Activated naive CD8-positive, alpha-beta T cell treated with anti-CD3 and anti-CD28 coated beads, Interleukin-2, amount 10 ng/mL, durations not matched to agents 7 days and 5 days (primary cell): ENCODE measurements at regions of chr2 and their contacts with region 1.

Region 1: DNA sequence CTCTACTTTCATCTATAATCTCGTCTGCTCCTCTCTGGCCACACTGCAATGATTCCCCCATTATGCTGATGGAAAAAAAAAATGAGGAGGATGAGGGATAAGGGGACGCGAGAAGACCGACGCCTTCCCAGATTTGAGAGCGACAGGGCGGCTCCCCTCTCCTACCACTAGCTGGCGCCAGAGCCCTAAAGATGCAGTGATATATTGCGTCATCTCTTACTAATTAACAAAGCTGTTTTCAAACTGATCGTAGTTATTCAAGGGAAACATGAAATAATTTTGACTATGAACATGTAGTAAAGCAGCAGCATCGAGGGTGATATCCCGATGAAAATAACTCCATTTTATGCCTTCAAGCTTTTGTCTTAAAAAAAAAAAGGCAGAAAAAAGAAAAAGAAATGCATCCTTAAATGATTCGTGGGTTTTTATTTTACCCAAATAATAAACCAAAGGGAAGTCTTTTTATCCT is 48.0 kb upstream of the HNRNPA3 start:
- DNase-seq: peak; percentile 77
- ATAC-seq: peak; percentile 55
- H3K4me3 Mint-ChIP-seq: no peak overlapping the region
- H3K27ac Mint-ChIP-seq: no peak overlapping the region
- H3K4me1 Mint-ChIP-seq: peaks cover 34% of the 10 kb centered on the region
- H3K27me3 Mint-ChIP-seq: peaks cover 16% of the 10 kb centered on the region

Region 2: DNA sequence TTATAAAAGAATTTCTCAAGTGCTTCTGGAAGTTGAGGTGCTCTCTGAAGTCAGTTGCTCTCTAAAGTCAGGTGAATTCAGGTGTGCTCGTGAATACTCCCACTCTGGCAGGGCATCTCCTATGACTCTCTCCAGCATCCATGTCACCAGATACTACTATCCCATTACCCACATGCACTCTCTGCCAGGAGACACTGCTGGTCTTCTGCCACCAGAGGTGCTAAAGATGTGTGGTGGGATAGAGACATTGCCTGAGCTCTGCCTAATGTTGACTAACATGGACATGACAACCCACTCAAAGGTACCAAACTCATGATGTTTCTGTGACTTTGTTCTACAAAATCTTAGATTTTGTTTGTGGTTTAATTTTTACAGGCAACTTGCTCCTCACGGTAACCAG is 58.4 kb before region 1 on chr2:
- POLR2A ChIA-PET with region 1: no interaction called
- DNase-seq: no peak
- ATAC-seq: no peak
- H3K4me3 Mint-ChIP-seq: no peak overlapping the region
- H3K27ac Mint-ChIP-seq: no peak overlapping the region
- H3K4me1 Mint-ChIP-seq: no peaks in the 10 kb centered on the region
- H3K27me3 Mint-ChIP-seq: no peaks in the 10 kb centered on the region

Region 3: GRCh38 chr2:177212106-177212890 is 47.7 kb after region 1 on chr2 and contains the start of gene HNRNPA3:
- POLR2A ChIA-PET with region 1: interaction called, 25 read pairs
- DNase-seq: peak; percentile 100
- ATAC-seq: peak; percentile 88
- H3K4me3 Mint-ChIP-seq: peak within 1 kb of the TSS; percentile 100
- H3K27ac Mint-ChIP-seq: peak within 1 kb of the TSS; percentile 100
- H3K4me1 Mint-ChIP-seq: peaks cover 34% of the 10 kb centered on the region
- H3K27me3 Mint-ChIP-seq: no peaks in the 10 kb centered on the region
- total RNA-seq, gene HNRNPA3: 250 to 256 TPM

Region 4: GRCh38 chr2:177234024-177234666 is 69.5 kb after region 1 on chr2:
- POLR2A ChIA-PET with region 1: no interaction called
- DNase-seq: no peak
- ATAC-seq: no peak
- H3K4me3 Mint-ChIP-seq: no peak overlapping the region
- H3K27ac Mint-ChIP-seq: no peak overlapping the region
- H3K4me1 Mint-ChIP-seq: peaks cover 35% of the 10 kb centered on the region
- H3K27me3 Mint-ChIP-seq: no peaks in the 10 kb centered on the region